Endothelial cell of umbilical vein (primary cell): ENCODE measurements at regions of chr1 and their contacts with region 1.

Region 1: GRCh38 chr1:223133824-223134435 is 9.1 kb downstream of the TLR5 start:
- DNase-seq: peak; percentile 79
- H3K4me3 ChIP-seq: peak overlapping the region in 2 of 3 experiments; percentile 2 to 50
- H3K27ac ChIP-seq: no peak overlapping the region
- H3K4me1 ChIP-seq: peaks cover 8% of the 10 kb centered on the region
- H3K27me3 ChIP-seq: peaks cover 30 to 31% of the 10 kb centered on the region in 2 experiments
- CTCF ChIP-seq: peak; percentile 94 to 98
- POLR2A ChIP-seq: no peak

Region 2: DNA sequence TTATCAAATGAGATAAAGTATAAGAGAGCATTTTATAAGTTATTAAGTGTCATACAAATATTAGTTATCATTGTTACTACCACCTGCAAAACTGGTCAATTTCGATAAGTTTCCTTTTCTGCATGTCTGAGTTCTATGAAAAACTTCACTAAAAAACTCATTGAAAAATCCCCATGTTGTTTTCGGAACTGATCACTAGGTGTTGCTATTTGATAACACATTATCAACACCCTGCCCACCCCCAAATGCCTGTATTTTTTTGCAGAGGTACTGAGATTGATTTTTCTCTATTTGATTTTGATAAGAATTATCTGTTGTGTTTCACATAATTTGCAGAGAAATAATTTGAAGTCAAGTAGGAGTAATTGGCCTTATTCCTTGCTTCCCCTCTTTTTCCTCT is 341.2 kb before region 1 on chr1:
- CTCF ChIA-PET with region 1: interaction called, 13 read pairs
- POLR2A ChIA-PET with region 1: interaction called, 3 read pairs
- dilution Hi-C with region 1: no loop called
- intact Hi-C with region 1: loop called (anchors 1 kb)
- DNase-seq: peak; percentile 44
- H3K4me3 ChIP-seq: no peak overlapping the region
- H3K27ac ChIP-seq: no peak overlapping the region
- H3K4me1 ChIP-seq: peaks cover 10% of the 10 kb centered on the region
- H3K27me3 ChIP-seq: peaks cover 0 to 2% of the 10 kb centered on the region in 2 experiments
- CTCF ChIP-seq: peak; percentile 20 to 29
- POLR2A ChIP-seq: no peak

Region 3: DNA sequence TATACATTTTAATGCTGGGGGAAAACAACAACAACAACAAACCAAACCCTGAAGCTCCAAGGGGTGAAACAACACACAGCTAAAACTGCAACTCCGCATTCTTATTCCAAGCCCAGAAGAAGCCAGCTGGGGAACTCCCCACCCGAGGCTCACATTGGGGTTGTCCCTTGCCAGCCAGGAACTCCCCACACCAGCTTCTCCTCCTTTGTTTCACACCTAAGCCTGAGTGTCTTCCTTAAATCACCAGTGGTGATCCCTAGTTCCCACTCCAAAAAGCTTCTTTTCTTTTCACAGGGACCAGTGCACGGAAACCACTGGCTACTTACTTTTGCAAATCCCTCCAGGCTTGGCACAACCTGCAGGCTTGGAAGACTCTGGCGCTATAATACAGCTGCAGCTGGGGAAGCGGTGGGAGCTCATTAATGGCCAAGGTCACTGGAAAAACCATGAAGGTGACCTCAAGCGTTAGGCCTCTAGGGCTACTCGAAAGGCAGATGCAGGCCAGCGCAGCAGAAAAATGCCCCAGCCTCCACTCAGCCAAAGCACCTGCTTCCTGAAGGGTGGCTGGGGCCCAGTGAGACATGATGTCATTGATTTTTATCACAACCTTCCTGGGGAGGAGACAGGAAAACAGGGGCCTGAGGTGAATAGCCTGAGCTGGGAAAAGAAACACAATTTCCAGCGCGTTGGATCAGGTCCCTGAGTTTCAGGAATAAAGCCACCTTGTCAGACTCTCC is 31.0 kb before region 1 on chr1:
- CTCF ChIA-PET with region 1: interaction called, 19 read pairs
- POLR2A ChIA-PET with region 1: no interaction called
- dilution Hi-C with region 1: no loop called
- intact Hi-C with region 1: no loop called
- DNase-seq: peak; percentile 98
- H3K4me3 ChIP-seq: peak overlapping the region in 1 of 3 experiments; percentile 9
- H3K27ac ChIP-seq: peak overlapping the region; percentile 75
- H3K4me1 ChIP-seq: peaks cover 26% of the 10 kb centered on the region
- H3K27me3 ChIP-seq: peaks cover 0 to 3% of the 10 kb centered on the region in 2 experiments
- CTCF ChIP-seq: no peak
- POLR2A ChIP-seq: no peak

Region 4: GRCh38 chr1:223233410-223234169 is 99.7 kb after region 1 on chr1:
- CTCF ChIA-PET with region 1: interaction called, 4 read pairs
- POLR2A ChIA-PET with region 1: no interaction called
- dilution Hi-C with region 1: no loop called
- intact Hi-C with region 1: loop called (anchors 5 kb)
- DNase-seq: peak; percentile 91
- H3K4me3 ChIP-seq: no peak overlapping the region
- H3K27ac ChIP-seq: peak overlapping the region; percentile 47
- H3K4me1 ChIP-seq: peaks cover 13% of the 10 kb centered on the region
- H3K27me3 ChIP-seq: no peaks in the 10 kb centered on the region
- CTCF ChIP-seq: no peak
- POLR2A ChIP-seq: no peak

Region 5: DNA sequence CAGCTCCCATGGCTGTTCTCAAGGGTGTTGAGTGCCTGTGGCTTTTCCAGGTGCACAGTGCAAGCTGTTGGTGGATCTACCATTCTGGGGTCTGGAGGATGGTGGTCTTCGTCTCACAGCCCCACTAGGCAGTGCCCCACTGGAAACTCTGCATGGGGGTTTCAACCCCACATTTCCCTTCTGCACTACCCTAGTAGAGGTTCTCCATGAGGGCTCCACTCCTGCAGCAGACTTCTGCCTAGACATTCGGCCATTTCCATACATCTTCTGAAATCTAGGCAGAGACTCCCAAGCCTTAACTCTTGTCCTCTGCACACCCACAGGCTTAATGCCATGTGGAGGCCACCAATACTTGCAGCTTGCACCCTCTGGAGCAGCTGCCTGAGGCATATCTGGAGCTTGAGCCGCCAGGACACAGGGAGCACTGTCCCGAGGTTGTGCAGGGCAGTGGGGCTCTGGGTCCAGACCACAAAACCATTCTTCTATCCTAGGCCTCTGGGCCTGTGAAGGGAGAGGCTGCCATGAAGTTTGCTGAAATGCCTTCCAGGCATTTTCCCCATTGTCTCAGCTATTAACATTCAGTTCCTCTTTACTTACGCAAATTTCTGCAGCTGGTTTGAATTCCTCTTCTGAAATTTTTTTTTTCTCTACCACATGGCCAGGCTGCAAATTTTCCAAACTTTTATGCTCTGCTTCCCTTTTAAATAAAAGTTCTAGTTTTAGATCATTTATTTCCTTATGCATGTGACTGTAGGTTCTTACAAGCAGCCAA is 540.4 kb after region 1 on chr1:
- CTCF ChIA-PET with region 1: interaction called, 104 read pairs
- POLR2A ChIA-PET with region 1: no interaction called
- dilution Hi-C with region 1: no loop called
- intact Hi-C with region 1: no loop called
- DNase-seq: no peak
- H3K4me3 ChIP-seq: no peak overlapping the region
- H3K27ac ChIP-seq: no peak overlapping the region
- H3K4me1 ChIP-seq: no peaks in the 10 kb centered on the region
- H3K27me3 ChIP-seq: peaks cover 0 to 3% of the 10 kb centered on the region in 2 experiments
- CTCF ChIP-seq: no peak
- POLR2A ChIP-seq: no peak